IMR-90 (cell line): ENCODE measurements at regions of chr6 and their contacts with region 1.

Region 1: DNA sequence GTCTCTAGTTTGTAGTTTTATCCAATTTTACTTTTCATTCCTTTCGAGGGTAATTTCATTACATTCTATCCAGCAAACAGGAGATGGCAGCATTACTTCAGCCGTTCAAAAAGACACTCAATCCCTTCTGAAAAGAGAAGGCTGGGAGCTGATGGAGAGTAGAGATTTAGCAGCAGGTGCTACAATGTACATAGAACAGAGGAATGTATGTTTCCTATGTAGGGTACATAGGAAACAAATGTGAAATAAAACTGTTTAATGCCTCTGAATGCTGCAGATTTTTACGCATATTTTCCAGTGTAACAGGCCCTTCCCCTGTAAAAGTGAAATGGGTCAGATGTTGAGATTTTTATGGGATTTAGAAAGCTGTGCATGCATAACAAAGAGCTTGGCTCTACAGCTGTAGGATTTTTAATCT is 16.0 kb downstream of the RPS12 start:
- DNase-seq: peak; percentile 59
- ATAC-seq: peak; percentile 85
- H3K4me3 ChIP-seq: no peak overlapping the region
- H3K27ac ChIP-seq: no peak overlapping the region
- H3K4me1 ChIP-seq: no peaks in the 10 kb centered on the region
- H3K27me3 ChIP-seq: no peaks in the 10 kb centered on the region
- CTCF ChIP-seq: peak; percentile 74
- POLR2A ChIP-seq: no peak
- RAD21 ChIP-seq: peak; percentile 93

Region 2: DNA sequence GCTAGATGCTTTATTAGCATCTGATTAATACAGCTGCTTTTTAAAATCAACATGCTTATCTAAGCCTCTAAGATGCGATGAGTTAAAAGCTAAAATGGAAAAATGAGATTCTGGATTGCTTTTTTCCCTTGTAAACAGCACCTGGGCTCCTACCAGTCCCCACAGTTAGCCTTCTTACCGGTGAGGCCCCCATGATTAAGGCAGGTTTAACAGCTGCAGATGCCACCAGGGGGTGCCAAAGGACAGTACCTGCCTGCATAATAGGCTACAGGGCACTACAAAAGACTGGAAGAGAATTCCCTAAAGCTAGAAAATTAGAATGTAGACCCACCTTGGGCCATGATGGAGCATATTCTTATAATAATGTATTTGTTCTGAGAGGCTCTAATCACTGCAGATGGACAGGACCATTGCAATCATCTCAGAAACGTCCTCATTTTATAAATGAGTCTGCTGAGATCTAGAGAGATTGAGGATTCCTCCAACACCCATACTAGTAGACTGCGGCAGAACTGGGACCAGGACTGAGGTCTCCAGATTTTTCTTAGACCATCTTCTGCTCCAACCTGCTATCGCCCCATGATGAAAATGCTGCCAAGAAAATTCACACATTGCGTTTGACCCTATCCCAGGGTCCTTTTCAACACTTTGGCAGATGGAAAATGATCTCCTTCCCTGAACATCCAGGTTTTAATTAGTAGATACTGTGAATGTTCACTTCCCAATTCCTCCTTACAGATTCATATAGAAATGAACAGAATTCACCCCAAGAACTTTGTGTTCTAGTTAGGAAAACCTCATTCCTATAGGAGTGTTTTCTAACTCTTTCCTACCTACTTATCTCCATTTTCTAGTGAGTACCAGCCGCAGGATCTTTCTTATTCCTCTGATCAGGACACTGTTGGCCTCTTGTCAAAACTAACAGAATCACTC is 132.9 kb after region 1 on chr6:
- CTCF ChIA-PET with region 1: interaction called, 10 read pairs
- POLR2A ChIA-PET with region 1: no interaction called
- dilution Hi-C with region 1: no loop called
- in situ Hi-C with region 1: no loop called
- intact Hi-C with region 1: loop called (anchors 2 kb)
- DNase-seq: peak; percentile 77
- ATAC-seq: peak; percentile 60
- H3K4me3 ChIP-seq: no peak overlapping the region
- H3K27ac ChIP-seq: no peak overlapping the region
- H3K4me1 ChIP-seq: peaks cover 9% of the 10 kb centered on the region
- H3K27me3 ChIP-seq: no peaks in the 10 kb centered on the region
- CTCF ChIP-seq: peak; percentile 71
- POLR2A ChIP-seq: no peak
- RAD21 ChIP-seq: peak; percentile 82

Region 3: DNA sequence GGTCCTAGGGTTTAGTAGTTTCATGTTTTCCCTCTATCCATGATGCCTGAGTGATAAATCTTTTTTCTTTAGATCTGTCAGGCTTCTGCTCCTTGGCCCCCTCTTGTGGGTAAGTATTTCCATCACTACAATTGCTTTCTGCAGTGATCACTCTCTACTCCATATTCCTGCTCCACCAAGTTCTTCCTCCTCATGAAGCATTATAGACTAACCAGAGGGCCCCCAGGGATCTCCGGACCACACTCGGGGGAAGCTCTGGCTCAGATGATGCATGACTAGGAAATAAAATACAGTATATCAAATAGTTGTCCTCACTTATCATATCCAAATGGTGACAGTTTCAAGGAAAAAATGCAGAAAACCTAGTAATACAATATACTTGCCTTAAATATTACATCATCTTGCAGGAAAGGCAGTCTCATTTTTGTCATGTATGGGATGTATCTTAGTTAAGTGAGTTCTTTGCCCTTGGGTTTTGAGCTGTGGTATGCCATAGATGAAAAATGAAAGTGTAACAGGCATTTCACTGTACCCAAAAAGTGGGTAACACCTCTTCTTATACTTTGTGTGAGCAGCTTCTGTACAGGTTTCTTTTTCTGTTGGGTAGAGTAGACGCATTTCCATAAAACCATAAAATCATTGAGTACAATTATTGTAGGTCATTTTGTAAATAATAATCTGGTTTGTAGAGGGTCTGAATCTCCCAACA is 209.9 kb after region 1 on chr6:
- CTCF ChIA-PET with region 1: no interaction called
- POLR2A ChIA-PET with region 1: no interaction called
- dilution Hi-C with region 1: no loop called
- in situ Hi-C with region 1: loop called (anchors 10 kb)
- intact Hi-C with region 1: loop called (anchors 1 kb)
- DNase-seq: peak; percentile 34
- ATAC-seq: peak; percentile 62
- H3K4me3 ChIP-seq: no peak overlapping the region
- H3K27ac ChIP-seq: no peak overlapping the region
- H3K4me1 ChIP-seq: no peaks in the 10 kb centered on the region
- H3K27me3 ChIP-seq: no peaks in the 10 kb centered on the region
- CTCF ChIP-seq: peak; percentile 59
- POLR2A ChIP-seq: no peak
- RAD21 ChIP-seq: peak; percentile 61

Region 4: GRCh38 chr6:133184798-133185372 is 354.5 kb after region 1 on chr6:
- CTCF ChIA-PET with region 1: no interaction called
- POLR2A ChIA-PET with region 1: no interaction called
- dilution Hi-C with region 1: no loop called
- in situ Hi-C with region 1: no loop called
- intact Hi-C with region 1: loop called (anchors 2 kb)
- DNase-seq: peak; percentile 53
- ATAC-seq: peak; percentile 49; the same call in 1 of the 2 replicates
- H3K4me3 ChIP-seq: no peak overlapping the region
- H3K27ac ChIP-seq: no peak overlapping the region
- H3K4me1 ChIP-seq: 0 out of 2 replicates have a peak, but pooled peaks cover 2% of the 10 kb centered on the region
- H3K27me3 ChIP-seq: no peaks in the 10 kb centered on the region
- CTCF ChIP-seq: peak; percentile 70
- POLR2A ChIP-seq: no peak
- RAD21 ChIP-seq: peak; percentile 69

Region 5: GRCh38 chr6:133241086-133241900 is 410.9 kb after region 1 on chr6 and contains the start of gene EYA4:
- CTCF ChIA-PET with region 1: no interaction called
- POLR2A ChIA-PET with region 1: no interaction called
- dilution Hi-C with region 1: no loop called
- in situ Hi-C with region 1: no loop called
- intact Hi-C with region 1: loop called (anchors 5 kb)
- DNase-seq: peak; percentile 74
- ATAC-seq: peak; percentile 73
- H3K4me3 ChIP-seq: peak within 1 kb of the TSS; percentile 77
- H3K27ac ChIP-seq: peak within 1 kb of the TSS; percentile 97
- H3K4me1 ChIP-seq: peaks cover 3% of the 10 kb centered on the region
- H3K27me3 ChIP-seq: no peaks in the 10 kb centered on the region
- CTCF ChIP-seq: 0 out of 2 replicates have a peak, but pooled peaks have one; percentile 13
- POLR2A ChIP-seq: no peak
- RAD21 ChIP-seq: no peak
- total RNA-seq, gene EYA4: 11.1 and 11.9 TPM in 2 replicates

Region 6: GRCh38 chr6:133512410-133513016 is 682.2 kb after region 1 on chr6:
- CTCF ChIA-PET with region 1: interaction called, 3 read pairs
- POLR2A ChIA-PET with region 1: no interaction called
- dilution Hi-C with region 1: no loop called
- in situ Hi-C with region 1: loop called (anchors 10 kb)
- intact Hi-C with region 1: loop called (anchors 1 kb)
- DNase-seq: peak; percentile 67
- ATAC-seq: peak; percentile 72
- H3K4me3 ChIP-seq: no peak overlapping the region
- H3K27ac ChIP-seq: no peak overlapping the region
- H3K4me1 ChIP-seq: no peaks in the 10 kb centered on the region
- H3K27me3 ChIP-seq: no peaks in the 10 kb centered on the region
- CTCF ChIP-seq: peak; percentile 81
- POLR2A ChIP-seq: peak; percentile 46; the same call in 1 of the 2 replicates
- RAD21 ChIP-seq: peak; percentile 92